ENCODE measurements at regions of chr1 and their contacts with region 1.

Region 1: GRCh38 chr1:116570358-116571200 is at the start of gene CD58:
- DNase-seq: no peak
- ATAC-seq: peak; percentile 76
- H3K4me3 ChIP-seq: peak within 1 kb of the TSS; percentile 97
- H3K27ac ChIP-seq: peak within 1 kb of the TSS; percentile 95
- H3K4me1 ChIP-seq: peaks cover 40% of the 10 kb centered on the region
- H3K27me3 ChIP-seq: no peaks in the 10 kb centered on the region
- CTCF ChIP-seq: peak; percentile 69 to 72 (median 70)
- EP300 ChIP-seq: 0 out of 4 replicates have a peak, but pooled peaks have one; percentile 12 to 27
- POLR2A ChIP-seq: peak; percentile 93
- RAD21 ChIP-seq: peak; percentile 32; the same call in 1 of the 2 replicates
- polyA plus RNA-seq, gene CD58: 110 to 125 TPM

Region 2: DNA sequence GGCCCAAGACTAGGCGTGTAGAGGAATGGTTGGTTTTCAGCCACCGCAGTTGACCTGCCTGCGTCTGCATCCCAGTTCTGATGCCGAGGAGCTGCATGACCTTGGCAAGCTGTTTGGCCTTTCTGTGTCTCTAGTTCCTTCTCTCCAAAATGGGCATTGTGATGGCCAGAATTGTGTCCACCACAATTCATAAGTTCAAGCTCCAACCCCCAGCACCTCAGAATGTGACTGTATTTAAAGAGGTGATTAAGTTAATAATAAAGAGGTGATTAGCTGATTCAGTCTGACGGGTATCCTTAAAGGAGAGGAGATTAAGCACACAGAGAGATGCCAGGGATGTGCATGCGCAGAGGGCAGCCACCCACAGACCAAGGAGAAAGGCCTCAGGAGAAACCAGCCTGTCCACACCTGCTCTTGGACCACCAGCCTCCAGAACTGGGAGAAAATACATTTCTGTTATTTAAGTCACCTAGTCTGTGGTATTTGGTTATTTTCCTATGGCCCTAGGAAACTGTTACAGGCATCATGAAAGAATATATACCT is 430.9 kb before region 1 on chr1:
- CTCF ChIA-PET with region 1: interaction called, 10 read pairs
- POLR2A ChIA-PET with region 1: no interaction called
- RAD21 ChIA-PET with region 1: interaction called, 4 read pairs
- SMC1A ChIA-PET with region 1: interaction called, 6 read pairs
- in situ Hi-C with region 1: no loop called
- intact Hi-C with region 1: no loop called
- DNase-seq: no peak
- ATAC-seq: no peak
- H3K4me3 ChIP-seq: no peak overlapping the region
- H3K27ac ChIP-seq: no peak overlapping the region
- H3K4me1 ChIP-seq: peaks cover 2% of the 10 kb centered on the region; the same call in 1 of the 2 replicates
- H3K27me3 ChIP-seq: no peaks in the 10 kb centered on the region
- CTCF ChIP-seq: no peak
- EP300 ChIP-seq: no peak
- POLR2A ChIP-seq: no peak
- RAD21 ChIP-seq: no peak

Region 3: DNA sequence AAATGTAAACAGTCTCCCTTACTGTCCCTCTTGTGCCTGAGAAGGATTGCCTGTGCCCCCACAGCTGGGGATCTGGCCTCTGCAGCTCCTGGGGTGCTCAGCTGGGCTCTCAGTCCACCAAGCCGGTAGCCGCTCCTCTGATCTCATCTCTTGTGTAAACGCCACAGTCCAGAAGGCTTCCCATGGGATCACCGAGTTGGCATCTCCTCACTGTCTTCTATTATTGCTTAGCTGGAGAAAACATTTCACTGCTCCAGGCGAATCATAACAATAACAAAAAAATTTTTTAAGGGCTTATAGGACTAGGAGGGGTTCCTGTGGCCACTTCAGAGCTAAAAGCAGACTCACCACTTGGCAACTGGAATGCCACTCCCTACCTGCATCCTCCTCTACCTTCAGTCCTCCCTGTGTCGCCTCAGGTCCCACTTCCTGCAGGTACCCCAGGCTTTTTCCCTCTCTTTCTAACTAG is 121.7 kb before region 1 on chr1:
- CTCF ChIA-PET with region 1: no interaction called
- POLR2A ChIA-PET with region 1: no interaction called
- RAD21 ChIA-PET with region 1: no interaction called
- SMC1A ChIA-PET with region 1: no interaction called
- in situ Hi-C with region 1: no loop called
- intact Hi-C with region 1: no loop called
- DNase-seq: no peak
- ATAC-seq: no peak
- H3K4me3 ChIP-seq: no peak overlapping the region
- H3K27ac ChIP-seq: no peak overlapping the region
- H3K4me1 ChIP-seq: no peaks in the 10 kb centered on the region
- H3K27me3 ChIP-seq: no peaks in the 10 kb centered on the region
- CTCF ChIP-seq: no peak
- EP300 ChIP-seq: no peak
- POLR2A ChIP-seq: no peak
- RAD21 ChIP-seq: no peak

Region 4: DNA sequence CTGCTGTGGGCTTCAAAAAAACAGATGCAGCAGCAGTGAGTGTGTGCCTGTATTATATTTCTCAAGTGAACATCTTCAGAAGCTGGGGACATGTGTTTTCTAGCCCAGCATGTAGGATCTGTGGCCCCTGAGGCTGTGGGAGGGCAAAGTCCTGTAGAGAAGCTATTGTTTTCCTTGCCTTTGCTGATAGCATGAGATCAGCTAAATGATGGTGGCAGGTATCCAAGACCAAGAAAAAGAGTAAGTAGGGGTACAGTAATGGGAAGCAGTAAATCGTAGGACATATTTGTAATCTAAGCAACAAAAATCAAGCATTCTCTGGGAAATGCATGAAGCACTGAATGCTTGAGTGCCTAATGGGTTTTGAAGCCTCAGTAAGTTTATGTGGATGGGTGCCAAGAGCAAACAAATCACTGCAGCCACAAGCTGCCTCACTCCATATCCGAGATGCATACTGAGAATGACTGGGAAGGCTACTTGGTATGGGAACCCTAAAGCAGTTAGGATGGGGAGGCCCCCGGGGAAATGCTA is 98.1 kb before region 1 on chr1:
- CTCF ChIA-PET with region 1: no interaction called
- POLR2A ChIA-PET with region 1: no interaction called
- RAD21 ChIA-PET with region 1: no interaction called
- SMC1A ChIA-PET with region 1: no interaction called
- in situ Hi-C with region 1: no loop called
- intact Hi-C with region 1: no loop called
- DNase-seq: no peak
- ATAC-seq: no peak
- H3K4me3 ChIP-seq: no peak overlapping the region
- H3K27ac ChIP-seq: no peak overlapping the region
- H3K4me1 ChIP-seq: no peaks in the 10 kb centered on the region
- H3K27me3 ChIP-seq: no peaks in the 10 kb centered on the region
- CTCF ChIP-seq: no peak
- EP300 ChIP-seq: no peak
- POLR2A ChIP-seq: no peak
- RAD21 ChIP-seq: no peak

Region 5: GRCh38 chr1:116538544-116538943 is 32.0 kb before region 1 on chr1:
- CTCF ChIA-PET with region 1: interaction called, 10 read pairs
- POLR2A ChIA-PET with region 1: interaction called, 13 read pairs
- RAD21 ChIA-PET with region 1: interaction called, 20 read pairs
- SMC1A ChIA-PET with region 1: interaction called, 32 read pairs
- in situ Hi-C with region 1: no loop called
- intact Hi-C with region 1: loop called (anchors 2 kb)
- DNase-seq: no peak
- ATAC-seq: peak; percentile 89
- H3K4me3 ChIP-seq: no peak overlapping the region
- H3K27ac ChIP-seq: peak overlapping the region; percentile 66
- H3K4me1 ChIP-seq: peaks cover 51% of the 10 kb centered on the region
- H3K27me3 ChIP-seq: no peaks in the 10 kb centered on the region
- CTCF ChIP-seq: no peak
- EP300 ChIP-seq: peak in 1 of 2 experiments; percentile 34; a peak in 1 of 4 replicates
- POLR2A ChIP-seq: no peak
- RAD21 ChIP-seq: no peak

Region 6: DNA sequence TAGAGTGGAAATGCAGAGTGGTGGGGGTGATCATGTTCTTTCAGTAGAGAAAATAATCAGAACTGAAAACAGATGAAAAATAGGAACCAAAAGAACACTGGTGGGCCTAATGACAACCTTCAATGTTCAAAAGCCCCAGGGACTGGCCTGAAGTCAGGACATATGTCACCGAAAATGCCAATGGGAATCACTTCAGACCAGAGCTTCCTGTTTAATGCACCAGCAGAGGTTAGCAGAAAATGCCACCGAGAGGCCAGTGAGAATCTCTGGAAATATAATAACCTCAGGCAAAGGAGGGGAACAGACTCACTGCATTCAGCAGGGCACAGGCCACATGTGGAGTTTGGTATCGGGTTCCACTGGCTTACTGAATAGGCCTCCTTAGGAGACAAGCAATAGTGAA is 16.2 kb after region 1 on chr1:
- CTCF ChIA-PET with region 1: interaction called, 21 read pairs
- POLR2A ChIA-PET with region 1: interaction called, 3 read pairs
- RAD21 ChIA-PET with region 1: interaction called, 13 read pairs
- SMC1A ChIA-PET with region 1: interaction called, 38 read pairs
- in situ Hi-C with region 1: no loop called
- intact Hi-C with region 1: no loop called
- DNase-seq: no peak
- ATAC-seq: peak; percentile 84
- H3K4me3 ChIP-seq: no peak overlapping the region
- H3K27ac ChIP-seq: peak overlapping the region; percentile 66
- H3K4me1 ChIP-seq: peaks cover 21% of the 10 kb centered on the region
- H3K27me3 ChIP-seq: no peaks in the 10 kb centered on the region
- CTCF ChIP-seq: no peak
- EP300 ChIP-seq: peak; percentile 69 to 73; a peak in 2 of 4 replicates
- POLR2A ChIP-seq: no peak
- RAD21 ChIP-seq: no peak

Region 7: DNA sequence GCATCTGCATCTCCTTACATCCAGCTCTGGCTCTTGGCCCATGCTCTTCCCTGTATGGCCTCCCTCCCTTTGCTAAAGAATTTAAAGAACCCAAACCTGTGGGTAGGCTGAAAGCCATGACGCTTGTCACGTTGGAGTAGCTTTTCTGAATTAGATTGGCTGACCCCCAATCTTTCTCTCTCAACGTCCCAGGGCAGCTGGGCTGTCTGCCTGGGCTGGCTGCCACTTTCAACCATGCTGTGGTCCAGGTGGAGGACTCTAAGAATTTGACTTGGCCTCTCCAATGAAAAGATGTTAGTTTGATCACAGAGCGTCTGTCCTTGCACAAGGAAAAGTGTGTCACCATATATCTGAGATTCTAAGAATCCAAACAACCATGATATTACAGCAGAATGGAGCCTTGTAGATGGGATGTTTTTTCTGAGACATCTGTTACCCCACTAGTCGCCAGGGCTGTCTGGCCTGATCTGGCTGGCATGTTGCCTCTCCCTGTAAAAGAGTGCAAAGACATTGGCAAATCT is 103.5 kb after region 1 on chr1:
- CTCF ChIA-PET with region 1: interaction called, 137 read pairs
- POLR2A ChIA-PET with region 1: no interaction called
- RAD21 ChIA-PET with region 1: interaction called, 100 read pairs
- SMC1A ChIA-PET with region 1: interaction called, 67 read pairs
- in situ Hi-C with region 1: loop called (anchors 5 kb)
- intact Hi-C with region 1: loop called (anchors 1 kb)
- DNase-seq: no peak
- ATAC-seq: no peak
- H3K4me3 ChIP-seq: no peak overlapping the region
- H3K27ac ChIP-seq: no peak overlapping the region
- H3K4me1 ChIP-seq: no peaks in the 10 kb centered on the region
- H3K27me3 ChIP-seq: no peaks in the 10 kb centered on the region
- CTCF ChIP-seq: no peak
- EP300 ChIP-seq: no peak
- POLR2A ChIP-seq: no peak
- RAD21 ChIP-seq: no peak

Region 8: DNA sequence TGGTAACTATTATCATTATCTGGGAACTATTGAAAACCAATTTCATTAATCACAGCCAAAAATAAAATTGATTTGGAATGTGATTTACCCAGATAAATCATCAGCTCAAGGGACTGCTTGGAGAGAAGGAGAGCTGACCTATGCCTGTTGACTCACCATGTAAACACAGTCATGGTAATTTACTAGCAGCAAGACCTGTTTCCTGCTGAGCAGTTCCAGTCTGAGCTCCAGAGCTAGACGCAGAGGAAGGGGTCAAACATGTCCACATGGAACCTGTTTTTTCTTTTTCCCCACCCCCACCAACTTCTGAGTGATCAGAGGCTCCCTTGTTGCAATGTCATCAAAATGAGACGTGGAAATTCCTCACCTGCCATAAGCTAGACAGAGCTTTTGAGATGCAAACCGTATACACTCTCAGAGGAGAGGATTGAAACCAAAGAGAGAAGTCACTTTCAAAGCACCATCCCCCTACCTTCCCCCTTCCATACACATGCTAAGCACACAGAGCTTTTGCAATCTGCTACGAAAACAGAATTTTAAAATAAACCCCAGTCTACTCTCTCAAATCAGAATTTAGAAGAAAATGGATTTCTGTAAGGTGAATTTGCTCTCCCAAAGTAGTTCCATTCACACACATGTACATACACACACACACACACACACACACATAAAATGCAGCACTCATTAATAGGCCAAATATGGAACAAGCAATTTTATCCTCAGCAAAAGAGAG is 283.3 kb after region 1 on chr1:
- CTCF ChIA-PET with region 1: interaction called, 3 read pairs
- POLR2A ChIA-PET with region 1: no interaction called
- RAD21 ChIA-PET with region 1: interaction called, 11 read pairs
- SMC1A ChIA-PET with region 1: no interaction called
- in situ Hi-C with region 1: no loop called
- intact Hi-C with region 1: no loop called
- DNase-seq: no peak
- ATAC-seq: peak; percentile 81
- H3K4me3 ChIP-seq: no peak overlapping the region
- H3K27ac ChIP-seq: no peak overlapping the region
- H3K4me1 ChIP-seq: 0 out of 2 replicates have a peak, but pooled peaks cover 3% of the 10 kb centered on the region
- H3K27me3 ChIP-seq: no peaks in the 10 kb centered on the region
- CTCF ChIP-seq: no peak
- EP300 ChIP-seq: no peak
- POLR2A ChIP-seq: no peak
- RAD21 ChIP-seq: no peak

Region 9: GRCh38 chr1:117059678-117060440 is 489.3 kb after region 1 on chr1 and contains the start of gene TTF2:
- CTCF ChIA-PET with region 1: interaction called, 36 read pairs
- POLR2A ChIA-PET with region 1: interaction called, 12 read pairs
- RAD21 ChIA-PET with region 1: interaction called, 27 read pairs
- SMC1A ChIA-PET with region 1: interaction called, 15 read pairs
- in situ Hi-C with region 1: loop called (anchors 5 kb)
- intact Hi-C with region 1: no loop called
- DNase-seq: peak; percentile 99
- ATAC-seq: peak; percentile 86
- H3K4me3 ChIP-seq: peak within 1 kb of the TSS; percentile 84
- H3K27ac ChIP-seq: peak within 1 kb of the TSS; percentile 90
- H3K4me1 ChIP-seq: peaks cover 4% of the 10 kb centered on the region
- H3K27me3 ChIP-seq: no peaks in the 10 kb centered on the region
- CTCF ChIP-seq: peak in 1 of 3 experiments; percentile 26; a peak in 1 of 6 replicates
- EP300 ChIP-seq: peak in 1 of 2 experiments; percentile 40; a peak in 1 of 4 replicates
- POLR2A ChIP-seq: peak; percentile 85
- RAD21 ChIP-seq: no peak
- polyA plus RNA-seq, gene TTF2: 17.7 to 20.8 TPM

Measured in GM12878 (cell line).